ENCODE measurements at regions of chr6 and their contacts with region 1.

Region 1: DNA sequence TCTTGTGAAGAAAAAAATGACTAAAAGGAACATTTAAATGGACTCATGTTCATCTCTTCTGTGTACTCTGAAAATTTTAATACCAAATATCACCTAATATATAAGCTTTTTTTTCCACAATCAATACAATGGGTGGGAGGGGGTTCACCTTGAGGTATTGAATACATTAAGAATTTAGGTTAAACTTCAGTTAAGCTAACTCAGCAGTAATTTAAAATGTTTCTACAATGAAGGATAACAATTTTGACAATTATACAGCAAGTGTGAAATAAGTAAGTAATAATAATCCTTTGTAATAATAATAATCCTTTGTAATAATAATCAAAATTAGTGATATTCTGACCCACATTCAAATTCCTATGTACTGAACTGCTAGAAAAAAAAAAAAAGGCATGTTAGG is 136.0 kb downstream of the PRKN start:
- DNase-seq: no peak
- H3K4me3 ChIP-seq: no peak overlapping the region
- CTCF ChIP-seq: no peak

Region 2: GRCh38 chr6:162560891-162561290 is 30.6 kb before region 1 on chr6:
- in situ Hi-C with region 1: loop called (anchors 5 kb)
- DNase-seq: no peak
- H3K4me3 ChIP-seq: no peak overlapping the region
- CTCF ChIP-seq: no peak

Region 3: GRCh38 chr6:162625846-162626540 is 34.5 kb after region 1 on chr6:
- in situ Hi-C with region 1: no loop called
- DNase-seq: no peak
- H3K4me3 ChIP-seq: no peak overlapping the region
- CTCF ChIP-seq: no peak

Region 4: GRCh38 chr6:162644153-162644552 is 52.6 kb after region 1 on chr6:
- in situ Hi-C with region 1: loop called (anchors 5 kb)
- DNase-seq: no peak
- H3K4me3 ChIP-seq: no peak overlapping the region
- CTCF ChIP-seq: no peak